Caco-2 (cell line): ENCODE measurements at regions of chr22 and their contacts with region 1.

Region 1: DNA sequence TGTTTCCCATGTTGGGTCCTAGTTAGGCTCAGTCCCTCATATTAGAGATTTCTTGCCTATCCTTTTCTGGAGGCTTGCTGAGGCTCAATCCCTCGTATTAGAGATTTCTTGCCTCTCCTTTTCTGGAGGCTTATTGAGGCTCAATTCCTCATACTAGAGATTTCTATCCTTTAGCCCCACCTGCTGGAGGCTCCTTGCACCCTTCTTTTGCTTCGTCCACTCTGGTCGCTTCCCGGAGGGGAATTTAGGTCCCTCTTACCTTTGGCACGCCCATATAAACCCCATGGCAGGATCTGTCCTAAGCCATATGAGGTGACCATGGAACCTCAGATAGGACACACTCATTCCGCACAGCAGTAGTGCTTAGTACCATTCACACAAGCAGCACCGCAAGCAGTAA is 15.9 kb downstream of the CYP2D6 start:
- DNase-seq: peak in 1 of 2 experiments; percentile 47
- H3K4me3 ChIP-seq: no peak overlapping the region
- H3K4me3 Mint-ChIP-seq: no peak overlapping the region
- H3K27ac Mint-ChIP-seq: no peak overlapping the region
- H3K4me1 ChIP-seq: no peaks in the 10 kb centered on the region
- H3K4me1 Mint-ChIP-seq: no peaks in the 10 kb centered on the region
- H3K27me3 ChIP-seq: no peaks in the 10 kb centered on the region
- H3K27me3 Mint-ChIP-seq: no peaks in the 10 kb centered on the region
- CTCF ChIP-seq: peak; percentile 34 to 35

Region 2: GRCh38 chr22:42041784-42042183 is 72.9 kb before region 1 on chr22:
- CTCF ChIA-PET with region 1: no interaction called
- POLR2A ChIA-PET with region 1: no interaction called
- intact Hi-C with region 1: no loop called
- DNase-seq: no peak
- H3K4me3 ChIP-seq: no peak overlapping the region
- H3K4me3 Mint-ChIP-seq: no peak overlapping the region
- H3K27ac Mint-ChIP-seq: no peak overlapping the region
- H3K4me1 ChIP-seq: no peaks in the 10 kb centered on the region
- H3K4me1 Mint-ChIP-seq: no peaks in the 10 kb centered on the region
- H3K27me3 ChIP-seq: no peaks in the 10 kb centered on the region
- H3K27me3 Mint-ChIP-seq: peaks cover 8% of the 10 kb centered on the region
- CTCF ChIP-seq: no peak

Region 3: DNA sequence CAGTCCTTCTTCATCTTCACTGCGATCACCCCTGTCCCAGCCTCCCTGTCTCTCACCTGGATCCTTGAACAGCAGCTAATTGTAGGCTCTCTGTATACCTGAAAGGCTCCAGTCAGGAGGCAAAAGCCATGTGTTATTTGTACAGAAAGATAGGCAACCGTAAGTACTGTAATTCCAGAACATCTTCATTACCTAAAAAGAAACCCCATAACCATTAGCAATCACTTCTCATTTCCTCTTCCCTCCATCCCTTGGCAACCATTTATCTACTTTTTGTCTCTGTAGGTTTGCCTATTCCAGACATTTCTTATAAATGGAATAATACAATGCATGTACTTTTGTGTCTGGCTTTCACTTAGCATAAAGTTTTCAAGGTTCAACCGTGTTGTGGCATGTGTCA is 62.0 kb before region 1 on chr22:
- CTCF ChIA-PET with region 1: no interaction called
- POLR2A ChIA-PET with region 1: no interaction called
- intact Hi-C with region 1: loop called (anchors 10 kb)
- DNase-seq: no peak
- H3K4me3 ChIP-seq: no peak overlapping the region
- H3K4me3 Mint-ChIP-seq: no peak overlapping the region
- H3K27ac Mint-ChIP-seq: no peak overlapping the region
- H3K4me1 ChIP-seq: no peaks in the 10 kb centered on the region
- H3K4me1 Mint-ChIP-seq: no peaks in the 10 kb centered on the region
- H3K27me3 ChIP-seq: no peaks in the 10 kb centered on the region
- H3K27me3 Mint-ChIP-seq: no peaks in the 10 kb centered on the region
- CTCF ChIP-seq: no peak

Region 4: DNA sequence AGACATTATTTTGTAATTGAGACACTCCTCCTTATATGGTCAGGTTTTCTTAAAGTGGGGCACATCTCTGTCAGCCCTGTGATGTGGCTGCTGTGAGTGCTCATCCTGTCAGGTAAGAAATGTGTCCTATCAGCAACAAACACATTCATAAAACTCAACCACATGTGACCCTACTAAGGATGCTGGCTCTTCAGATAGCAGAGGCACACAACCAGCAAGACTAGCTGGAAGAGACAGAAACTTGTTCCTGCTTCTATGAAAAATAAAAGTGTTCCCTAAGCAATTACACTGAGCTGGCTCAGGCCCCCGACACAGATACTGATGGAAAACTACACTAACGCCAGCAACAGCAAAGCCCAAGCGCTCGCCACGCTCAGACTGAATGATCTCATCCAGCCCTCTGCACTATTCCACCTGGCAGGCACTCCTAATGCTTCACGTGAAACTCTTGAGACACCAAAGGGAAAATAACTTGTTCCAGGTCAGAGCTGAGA is 65.7 kb after region 1 on chr22:
- CTCF ChIA-PET with region 1: no interaction called
- POLR2A ChIA-PET with region 1: no interaction called
- intact Hi-C with region 1: no loop called
- DNase-seq: no peak
- H3K4me3 ChIP-seq: no peak overlapping the region
- H3K4me3 Mint-ChIP-seq: no peak overlapping the region
- H3K27ac Mint-ChIP-seq: no peak overlapping the region
- H3K4me1 ChIP-seq: peaks cover 5% of the 10 kb centered on the region; the same call in 1 of the 2 replicates
- H3K4me1 Mint-ChIP-seq: no peaks in the 10 kb centered on the region
- H3K27me3 ChIP-seq: no peaks in the 10 kb centered on the region
- H3K27me3 Mint-ChIP-seq: no peaks in the 10 kb centered on the region
- CTCF ChIP-seq: no peak